PC-3 (cell line): ENCODE measurements at regions of chr4 and their contacts with region 1.

Region 1: GRCh38 chr4:75845992-75846391 is 56.3 kb downstream of the PPEF2 start:
- DNase-seq: peak; percentile 17
- ATAC-seq: peak; percentile 56
- H3K4me3 ChIP-seq: no peak overlapping the region
- H3K27ac ChIP-seq: no peak overlapping the region
- H3K4me1 ChIP-seq: 0 out of 2 replicates have a peak, but pooled peaks cover 7% of the 10 kb centered on the region
- H3K27me3 ChIP-seq: no peaks in the 10 kb centered on the region
- CTCF ChIP-seq: no peak

Region 2: GRCh38 chr4:75821966-75822365 is 24.0 kb before region 1 on chr4:
- CTCF ChIA-PET with region 1: no interaction called
- POLR2A ChIA-PET with region 1: no interaction called
- intact Hi-C with region 1: loop called (anchors 2 kb)
- DNase-seq: peak; percentile 72
- ATAC-seq: peak; percentile 85
- H3K4me3 ChIP-seq: no peak overlapping the region
- H3K27ac ChIP-seq: no peak overlapping the region
- H3K4me1 ChIP-seq: no peaks in the 10 kb centered on the region
- H3K27me3 ChIP-seq: no peaks in the 10 kb centered on the region
- CTCF ChIP-seq: no peak

Region 3: DNA sequence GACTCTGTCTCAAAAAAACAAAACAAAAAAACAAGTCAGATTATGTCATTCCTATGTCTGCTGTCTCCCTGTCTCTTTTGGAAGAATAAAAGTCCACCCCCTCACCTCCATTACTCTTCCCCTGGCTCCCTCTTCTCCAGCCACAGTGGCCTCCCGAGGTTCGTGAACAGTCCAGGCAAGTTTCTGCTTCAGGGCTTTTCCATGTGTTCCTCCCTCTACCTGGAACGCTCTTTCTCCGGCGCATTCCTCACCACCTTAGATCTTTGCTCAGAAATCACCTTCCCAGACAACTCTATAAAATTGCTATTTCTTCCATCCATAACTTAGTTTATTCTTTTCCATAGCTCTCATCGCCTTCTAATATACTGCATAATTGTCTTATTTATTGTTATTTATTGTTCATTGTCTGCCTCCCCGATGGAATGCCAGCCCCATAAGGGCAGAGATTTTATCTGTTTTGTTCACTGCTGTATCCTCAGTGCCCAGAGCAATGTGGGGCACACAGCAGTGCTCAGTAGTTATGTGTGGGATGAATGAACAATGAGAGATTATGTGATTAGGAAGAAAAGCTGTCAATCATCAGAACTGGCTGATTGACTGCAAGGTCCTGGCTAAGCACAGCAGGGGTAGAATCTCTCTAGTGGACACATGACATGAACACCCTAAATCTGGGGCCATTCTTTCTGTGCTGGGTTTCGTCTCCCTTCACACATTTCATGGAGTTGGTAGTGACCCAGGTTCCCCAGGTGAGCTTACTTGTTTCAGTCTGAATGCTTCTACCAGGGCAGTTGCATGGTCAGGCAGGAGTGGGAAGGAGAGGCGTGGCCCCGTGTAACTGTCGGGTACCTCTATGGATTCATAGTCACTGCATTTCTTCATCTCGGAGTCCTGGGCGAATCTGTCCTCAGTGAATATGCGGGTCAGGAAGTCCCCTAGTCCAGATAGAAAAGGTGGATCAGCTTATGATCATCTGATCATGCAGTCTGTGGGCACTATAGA is 43.5 kb after region 1 on chr4:
- CTCF ChIA-PET with region 1: no interaction called
- POLR2A ChIA-PET with region 1: no interaction called
- intact Hi-C with region 1: no loop called
- DNase-seq: no peak
- ATAC-seq: no peak
- H3K4me3 ChIP-seq: no peak overlapping the region
- H3K27ac ChIP-seq: no peak overlapping the region
- H3K4me1 ChIP-seq: no peaks in the 10 kb centered on the region
- H3K27me3 ChIP-seq: no peaks in the 10 kb centered on the region
- CTCF ChIP-seq: no peak